ENCODE measurements at regions of chr3 and their contacts with region 1.

Region 1: GRCh38 chr3:69391554-69391953 is 5.7 kb upstream of the FRMD4B start:
- DNase-seq: no peak
- ATAC-seq: no peak
- H3K4me3 ChIP-seq: no peak overlapping the region
- H3K27ac ChIP-seq: no peak overlapping the region
- H3K4me1 ChIP-seq: no peaks in the 10 kb centered on the region
- H3K27me3 ChIP-seq: peaks cover 2% of the 10 kb centered on the region
- CTCF ChIP-seq: no peak
- POLR2A ChIP-seq: no peak
- RAD21 ChIP-seq: no peak

Region 2: GRCh38 chr3:69410250-69410649 is 18.7 kb after region 1 on chr3:
- CTCF ChIA-PET with region 1: interaction called, 3 read pairs
- POLR2A ChIA-PET with region 1: interaction called, 10 read pairs
- dilution Hi-C with region 1: no loop called
- in situ Hi-C with region 1: no loop called
- intact Hi-C with region 1: no loop called
- DNase-seq: peak; percentile 53
- ATAC-seq: peak; percentile 93
- H3K4me3 ChIP-seq: no peak overlapping the region
- H3K27ac ChIP-seq: no peak overlapping the region
- H3K4me1 ChIP-seq: no peaks in the 10 kb centered on the region
- H3K27me3 ChIP-seq: peaks cover 1% of the 10 kb centered on the region
- CTCF ChIP-seq: peak; percentile 67
- POLR2A ChIP-seq: no peak
- RAD21 ChIP-seq: peak; percentile 40

Region 3: GRCh38 chr3:69579306-69580041 is 187.9 kb after region 1 on chr3:
- CTCF ChIA-PET with region 1: no interaction called
- POLR2A ChIA-PET with region 1: no interaction called
- dilution Hi-C with region 1: no loop called
- in situ Hi-C with region 1: no loop called
- intact Hi-C with region 1: no loop called
- DNase-seq: no peak
- ATAC-seq: no peak
- H3K4me3 ChIP-seq: no peak overlapping the region
- H3K27ac ChIP-seq: no peak overlapping the region
- H3K4me1 ChIP-seq: no peaks in the 10 kb centered on the region
- H3K27me3 ChIP-seq: no peaks in the 10 kb centered on the region; the same call in 1 of the 2 replicates
- CTCF ChIP-seq: no peak
- POLR2A ChIP-seq: no peak
- RAD21 ChIP-seq: no peak

Measured in IMR-90 (cell line).